ENCODE measurements at regions of chr15 and their contacts with region 1.

Region 1: DNA sequence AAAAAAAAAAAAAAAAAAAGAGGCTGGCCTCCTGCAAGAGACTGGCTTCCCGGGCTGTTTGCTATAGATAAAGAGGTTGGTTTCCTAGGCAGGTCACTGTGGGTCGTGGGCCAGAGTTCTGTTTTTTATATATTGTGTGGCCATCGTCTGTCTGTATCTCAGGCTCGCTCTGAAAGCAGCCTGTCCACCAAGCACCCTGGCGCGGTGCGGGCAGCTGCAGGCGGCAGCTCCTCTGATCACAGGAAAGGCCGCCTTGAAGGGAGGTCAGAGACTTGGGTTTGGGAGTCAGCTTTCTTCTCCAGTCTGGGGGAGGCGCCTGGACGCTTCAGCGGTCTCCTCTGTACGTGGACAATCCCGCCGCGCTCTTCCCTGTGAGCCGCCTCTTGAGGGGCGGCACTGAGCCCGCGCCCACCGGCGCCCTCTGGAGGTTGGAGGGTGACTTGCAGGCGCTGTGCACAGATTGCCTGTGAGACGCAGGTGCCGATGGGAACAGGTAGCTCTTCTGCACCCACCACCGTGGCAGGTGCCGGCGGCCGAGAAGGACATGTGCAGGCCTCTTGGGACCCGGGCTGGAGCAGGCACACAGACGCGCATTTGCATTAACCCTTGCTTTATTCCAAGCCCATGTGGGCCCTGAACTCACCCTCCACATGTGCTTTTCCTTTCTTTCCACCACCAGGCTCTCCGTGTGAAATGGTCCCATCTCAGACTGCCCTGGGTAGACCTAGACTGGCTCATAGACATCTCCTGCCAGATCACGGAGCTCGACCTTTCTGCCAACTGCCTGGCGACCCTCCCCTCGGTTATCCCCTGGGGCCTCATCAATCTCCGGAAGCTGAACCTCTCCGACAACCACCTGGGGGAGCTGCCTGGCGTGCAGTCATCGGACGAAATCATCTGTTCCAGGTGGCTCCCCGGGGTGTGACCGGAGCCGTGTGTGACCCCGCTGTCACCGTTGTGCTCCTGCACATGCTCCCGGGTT is 89.3 kb downstream of the LRRK1 start:
- DNase-seq: peak; percentile 90
- H3K4me3 Mint-ChIP-seq: peak overlapping the region; percentile 84
- H3K27ac Mint-ChIP-seq: no peak overlapping the region
- H3K4me1 Mint-ChIP-seq: peaks cover 19% of the 10 kb centered on the region
- H3K27me3 Mint-ChIP-seq: peaks cover 3% of the 10 kb centered on the region

Region 2: DNA sequence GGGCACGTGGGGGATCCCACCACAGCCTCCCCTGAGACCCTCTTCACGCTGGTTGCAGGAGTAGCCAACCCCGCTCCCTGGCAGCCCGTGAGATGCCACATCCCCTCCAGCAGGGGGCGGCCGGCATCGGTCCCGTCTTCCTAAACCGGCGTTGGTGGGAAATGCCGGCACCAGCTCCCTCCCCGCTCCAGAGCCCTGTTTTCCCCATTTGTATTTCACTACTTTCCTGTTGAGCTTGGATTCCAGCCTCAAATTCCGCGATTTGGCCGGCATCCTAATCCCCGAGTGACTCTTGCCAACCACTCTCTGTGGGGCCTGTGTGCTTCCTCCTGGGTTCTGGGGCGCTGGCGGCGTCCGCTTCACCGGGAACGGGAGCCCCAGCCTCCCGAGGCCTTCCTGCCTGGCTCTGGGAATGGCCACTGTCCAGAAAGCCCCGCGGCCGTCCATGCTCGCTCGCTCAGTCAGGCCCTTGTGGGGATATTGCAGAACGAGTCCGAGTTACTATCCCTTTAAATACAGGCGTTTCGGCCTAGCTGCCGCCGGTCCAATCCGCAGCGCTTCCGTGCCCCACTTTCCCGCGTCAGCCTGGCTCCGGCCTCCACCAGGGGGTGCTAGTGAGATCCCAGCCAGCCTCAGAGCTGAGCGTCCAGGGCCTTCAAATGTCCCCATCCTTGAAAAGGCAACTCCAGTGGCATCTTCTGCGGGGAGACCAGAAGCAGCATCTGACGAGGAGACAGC is 658.6 kb before region 1 on chr15:
- CTCF ChIA-PET with region 1: interaction called, 40 read pairs
- POLR2A ChIA-PET with region 1: no interaction called
- intact Hi-C with region 1: loop called (anchors 1 kb)
- DNase-seq: peak; percentile 94
- H3K4me3 Mint-ChIP-seq: peak overlapping the region; percentile 80
- H3K27ac Mint-ChIP-seq: peak overlapping the region; percentile 69
- H3K4me1 Mint-ChIP-seq: peaks cover 6% of the 10 kb centered on the region
- H3K27me3 Mint-ChIP-seq: peaks cover 7% of the 10 kb centered on the region

Region 3: GRCh38 chr15:100635406-100636071 is 372.9 kb before region 1 on chr15:
- CTCF ChIA-PET with region 1: interaction called, 16 read pairs
- POLR2A ChIA-PET with region 1: no interaction called
- intact Hi-C with region 1: no loop called
- DNase-seq: no peak
- H3K4me3 Mint-ChIP-seq: no peak overlapping the region
- H3K27ac Mint-ChIP-seq: no peak overlapping the region
- H3K4me1 Mint-ChIP-seq: peaks cover 39% of the 10 kb centered on the region
- H3K27me3 Mint-ChIP-seq: no peaks in the 10 kb centered on the region

Region 4: GRCh38 chr15:100909991-100910955 is 98.2 kb before region 1 on chr15:
- CTCF ChIA-PET with region 1: interaction called, 218 read pairs
- POLR2A ChIA-PET with region 1: no interaction called
- intact Hi-C with region 1: no loop called
- DNase-seq: no peak
- H3K4me3 Mint-ChIP-seq: no peak overlapping the region
- H3K27ac Mint-ChIP-seq: no peak overlapping the region
- H3K4me1 Mint-ChIP-seq: no peaks in the 10 kb centered on the region
- H3K27me3 Mint-ChIP-seq: peaks cover 17% of the 10 kb centered on the region

Region 5: DNA sequence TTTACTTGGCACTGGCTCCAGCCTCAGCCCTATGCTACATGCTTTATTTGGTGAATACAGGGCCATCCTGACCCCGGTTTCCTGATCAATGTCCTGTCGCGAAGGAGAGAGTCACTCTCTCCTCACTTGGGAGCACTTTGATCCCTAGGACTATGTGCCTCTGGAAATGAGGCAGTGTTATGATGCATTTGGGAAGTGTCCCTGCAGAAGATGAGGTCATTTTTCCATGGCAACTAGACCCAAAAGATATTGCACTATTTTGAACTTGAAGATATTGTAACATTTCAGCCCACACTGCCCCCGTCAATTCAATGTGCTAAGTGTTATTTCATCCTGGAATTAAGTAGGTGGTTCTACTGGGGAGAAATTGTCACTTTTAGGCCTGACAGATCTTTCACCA is 21.3 kb before region 1 on chr15:
- CTCF ChIA-PET with region 1: interaction called, 25 read pairs
- POLR2A ChIA-PET with region 1: no interaction called
- intact Hi-C with region 1: no loop called
- DNase-seq: no peak
- H3K4me3 Mint-ChIP-seq: no peak overlapping the region
- H3K27ac Mint-ChIP-seq: no peak overlapping the region
- H3K4me1 Mint-ChIP-seq: no peaks in the 10 kb centered on the region
- H3K27me3 Mint-ChIP-seq: peaks cover 11% of the 10 kb centered on the region

Region 6: DNA sequence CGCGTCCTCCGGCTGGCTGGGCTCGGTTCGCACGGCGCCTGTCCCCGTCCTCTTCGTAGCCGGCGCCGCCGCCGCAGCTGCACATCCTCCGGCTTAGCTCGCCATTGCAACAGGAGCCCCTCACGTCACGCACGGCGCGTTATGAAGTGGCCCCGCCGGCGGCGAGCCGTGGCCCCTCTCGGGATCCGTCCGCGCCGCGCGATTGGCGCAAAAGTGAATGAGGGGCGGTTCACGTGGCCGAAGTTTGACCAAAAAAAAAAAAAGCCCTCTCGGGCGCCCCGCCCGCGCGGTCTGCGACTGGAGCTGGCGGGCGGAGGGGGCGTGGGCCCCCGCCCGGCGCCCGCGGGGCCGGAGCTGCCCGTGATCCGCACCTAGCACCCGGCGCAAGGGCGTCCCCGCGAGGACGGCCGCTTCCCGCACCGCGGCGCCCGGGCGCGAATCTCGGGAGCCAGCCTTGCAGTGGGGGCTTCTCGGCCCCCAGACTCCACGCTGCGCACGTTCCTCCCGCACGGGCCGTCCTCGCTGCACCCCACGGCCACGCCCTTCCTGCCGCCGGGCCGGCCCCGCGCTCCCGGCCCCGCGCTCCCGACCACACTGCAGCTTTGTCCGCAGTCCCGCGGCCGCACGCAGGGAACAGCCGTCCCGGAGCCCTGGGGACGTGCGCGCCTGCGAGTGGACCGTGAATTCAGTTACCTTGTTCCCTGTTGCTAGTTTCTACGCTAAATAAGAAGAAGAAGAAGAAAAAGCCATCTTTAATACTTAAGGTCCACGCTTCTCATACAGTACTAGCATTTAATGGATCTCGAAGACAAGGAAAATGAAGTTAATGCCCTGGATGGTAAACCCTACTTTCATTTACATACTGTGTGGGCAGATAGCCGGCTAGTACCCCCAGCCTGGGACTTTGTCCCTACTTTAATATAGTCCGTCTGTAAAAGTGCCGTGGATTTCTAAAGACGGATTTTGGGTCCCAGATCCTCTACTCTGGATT is 243.7 kb after region 1 on chr15 and contains the start of gene CHSY1:
- CTCF ChIA-PET with region 1: interaction called, 35 read pairs
- POLR2A ChIA-PET with region 1: no interaction called
- intact Hi-C with region 1: no loop called
- DNase-seq: peak; percentile 91
- H3K4me3 Mint-ChIP-seq: peak within 1 kb of the TSS; percentile 91
- H3K27ac Mint-ChIP-seq: peak within 1 kb of the TSS; percentile 86
- H3K4me1 Mint-ChIP-seq: peaks cover 51% of the 10 kb centered on the region
- H3K27me3 Mint-ChIP-seq: no peaks in the 10 kb centered on the region
- total RNA-seq, gene CHSY1: 34.8 to 36.3 TPM

Region 7: GRCh38 chr15:101277038-101277882 is 268.8 kb after region 1 on chr15 and contains the start of gene SELENOS:
- CTCF ChIA-PET with region 1: interaction called, 14 read pairs
- POLR2A ChIA-PET with region 1: no interaction called
- intact Hi-C with region 1: loop called (anchors 5 kb)
- DNase-seq: peak; percentile 90
- H3K4me3 Mint-ChIP-seq: peak within 1 kb of the TSS; percentile 92
- H3K27ac Mint-ChIP-seq: peak within 1 kb of the TSS; percentile 81
- H3K4me1 Mint-ChIP-seq: peaks cover 29% of the 10 kb centered on the region
- H3K27me3 Mint-ChIP-seq: no peaks in the 10 kb centered on the region
- total RNA-seq, gene SELENOS: 30.9 to 31.7 TPM